GM10248 (cell line): ENCODE measurements at regions of chr3 and their contacts with region 1.

Region 1: DNA sequence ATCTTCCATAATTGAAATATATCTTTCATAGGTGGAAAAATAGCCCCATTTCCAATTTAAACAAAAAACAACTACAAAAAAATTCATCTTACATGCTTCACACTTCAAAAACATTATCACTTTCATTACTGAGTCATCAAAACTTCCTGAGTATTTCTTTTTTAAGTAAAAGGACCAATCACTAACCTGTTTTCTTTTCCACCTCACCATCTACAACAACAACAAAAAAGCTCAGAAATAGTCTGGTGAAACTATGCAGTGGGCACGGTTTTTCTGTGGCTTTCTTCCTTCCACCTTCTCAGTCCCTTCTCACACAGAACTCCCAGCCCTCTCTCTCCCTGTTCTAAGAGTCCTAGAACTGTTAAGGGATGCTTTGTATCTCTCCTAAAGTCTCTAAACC is 20.3 kb upstream of the TNIK start:
- DNase-seq: peak; percentile 54
- CTCF ChIP-seq: no peak

Region 2: GRCh38 chr3:171491361-171491760 is 10.8 kb after region 1 on chr3:
- CTCF ChIA-PET with region 1: interaction called, 11 read pairs
- POLR2A ChIA-PET with region 1: no interaction called
- DNase-seq: no peak
- CTCF ChIP-seq: no peak

Region 3: GRCh38 chr3:171636666-171637065 is 156.1 kb after region 1 on chr3:
- CTCF ChIA-PET with region 1: no interaction called
- POLR2A ChIA-PET with region 1: no interaction called
- DNase-seq: no peak
- CTCF ChIP-seq: no peak

Region 4: DNA sequence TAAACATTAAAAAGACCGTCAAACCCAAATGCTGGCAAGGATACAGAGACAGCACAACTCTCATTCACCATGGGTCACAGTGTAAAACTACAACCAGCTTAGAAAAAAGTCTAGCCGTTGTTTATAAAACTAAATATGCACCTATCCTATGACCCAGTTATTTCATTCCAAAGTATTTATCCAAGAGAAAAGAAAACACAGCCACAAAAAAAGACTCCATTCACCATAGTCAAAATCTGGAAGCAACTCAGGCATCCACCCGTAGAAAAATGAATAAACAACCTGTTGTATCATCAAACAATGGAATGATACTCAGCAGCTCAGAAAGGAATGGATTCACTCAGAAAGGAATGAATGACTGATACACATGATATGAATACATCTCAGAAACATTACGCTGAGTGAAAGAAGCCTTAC is 301.2 kb after region 1 on chr3:
- CTCF ChIA-PET with region 1: no interaction called
- POLR2A ChIA-PET with region 1: no interaction called
- DNase-seq: no peak
- CTCF ChIP-seq: no peak